ENCODE measurements at regions of chr1 and their contacts with region 1.

Region 1: DNA sequence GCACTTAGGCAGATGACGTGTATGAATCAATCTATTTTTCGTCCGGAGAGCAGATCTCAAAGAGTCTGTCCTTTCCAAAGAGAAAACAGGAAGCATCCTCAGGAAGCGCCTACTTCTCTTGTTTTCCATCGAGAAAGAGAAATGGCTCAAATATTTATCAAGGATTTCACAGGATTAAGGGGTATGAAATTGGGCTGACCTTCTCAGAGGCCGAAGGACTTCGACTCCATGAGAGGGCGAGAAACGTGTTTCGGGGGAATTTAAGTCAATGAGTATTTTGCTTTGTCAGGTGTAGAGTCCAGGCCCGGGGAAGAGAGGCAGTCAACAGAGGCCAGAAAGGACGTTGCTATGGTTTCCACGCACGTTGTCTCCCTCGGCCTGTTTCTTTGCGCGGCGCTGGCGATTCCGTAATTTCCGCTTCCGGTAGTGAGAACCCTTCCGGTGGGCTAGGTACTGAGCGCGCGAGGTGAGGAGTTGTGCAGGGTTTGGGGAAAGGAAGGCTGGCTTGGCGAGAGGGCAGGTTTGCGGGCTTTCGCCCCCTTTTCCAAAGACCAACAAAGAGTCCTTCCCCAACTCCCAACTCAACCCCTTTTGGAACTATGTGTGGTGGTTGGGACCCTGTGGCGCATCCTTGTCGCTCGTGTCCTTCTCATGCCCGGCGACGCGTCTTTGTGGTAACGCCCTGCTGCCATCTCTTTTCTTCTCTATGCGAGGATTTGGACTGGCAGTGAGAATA is at the start of gene MRPS21:
- DNase-seq: peak; percentile 77
- ATAC-seq: peak; percentile 97
- H3K4me3 Mint-ChIP-seq: peak within 1 kb of the TSS; percentile 94
- H3K27ac Mint-ChIP-seq: peak within 1 kb of the TSS; percentile 99
- H3K4me1 Mint-ChIP-seq: peaks cover 30% of the 10 kb centered on the region
- H3K27me3 Mint-ChIP-seq: no peaks in the 10 kb centered on the region
- CTCF ChIP-seq: no peak
- total RNA-seq, gene MRPS21: 66.8 and 69.2 TPM in 2 replicates

Region 2: DNA sequence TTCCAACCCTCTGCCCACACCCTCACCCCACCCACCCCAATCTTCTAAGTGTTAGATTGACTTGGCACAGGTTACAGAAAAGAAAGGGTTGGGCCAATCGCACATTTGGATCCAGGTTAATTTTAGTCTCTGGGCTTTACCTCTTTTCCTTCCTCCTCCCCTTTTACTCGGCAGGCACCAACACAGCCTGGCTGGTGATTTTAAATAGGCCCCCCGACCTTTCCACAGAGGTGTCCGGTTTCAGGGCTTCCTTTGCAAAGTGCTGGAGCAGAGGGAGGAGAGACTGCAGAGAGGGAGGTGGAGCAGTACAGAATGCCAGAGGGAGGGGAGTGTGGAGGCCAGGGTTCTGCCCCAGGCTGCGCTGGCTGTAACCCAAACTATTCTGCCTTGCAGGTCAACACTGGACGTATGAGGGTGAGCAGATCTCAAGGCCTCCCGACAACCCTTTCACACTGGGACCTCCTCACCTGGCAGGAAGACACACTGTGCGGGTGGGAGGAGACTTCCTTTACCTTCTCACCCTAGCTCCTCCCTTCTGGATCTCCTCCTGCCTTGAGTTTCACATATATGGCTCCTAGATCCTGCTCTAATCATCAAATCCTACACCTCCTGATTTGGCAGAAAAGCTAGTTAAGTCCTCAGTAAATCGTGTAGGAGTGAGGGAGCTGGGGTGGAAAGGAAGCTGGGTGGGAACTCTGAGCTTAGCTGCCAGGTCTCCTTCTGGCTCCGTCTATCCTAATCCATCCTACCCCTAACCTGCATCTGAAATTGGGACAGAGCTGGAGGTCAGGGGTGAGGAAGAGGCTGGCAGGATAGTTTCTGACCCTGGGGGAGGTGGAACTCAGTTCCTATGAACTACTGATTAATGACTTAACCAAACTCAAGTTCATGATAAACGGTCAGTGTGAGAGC is 33.6 kb before region 1 on chr1:
- CTCF ChIA-PET with region 1: no interaction called
- POLR2A ChIA-PET with region 1: no interaction called
- intact Hi-C with region 1: loop called (anchors 1 kb)
- DNase-seq: no peak
- ATAC-seq: no peak
- H3K4me3 Mint-ChIP-seq: no peak overlapping the region
- H3K27ac Mint-ChIP-seq: no peak overlapping the region
- H3K4me1 Mint-ChIP-seq: peaks cover 17% of the 10 kb centered on the region
- H3K27me3 Mint-ChIP-seq: peaks cover 33% of the 10 kb centered on the region
- CTCF ChIP-seq: no peak

Region 3: GRCh38 chr1:150268705-150269403 is 24.7 kb before region 1 on chr1 and contains the start of gene APH1A:
- CTCF ChIA-PET with region 1: no interaction called
- POLR2A ChIA-PET with region 1: no interaction called
- intact Hi-C with region 1: loop called (anchors 1 kb)
- DNase-seq: peak; percentile 86
- ATAC-seq: peak; percentile 97
- H3K4me3 Mint-ChIP-seq: peak within 1 kb of the TSS; percentile 100
- H3K27ac Mint-ChIP-seq: peak within 1 kb of the TSS; percentile 94
- H3K4me1 Mint-ChIP-seq: peaks cover 32% of the 10 kb centered on the region
- H3K27me3 Mint-ChIP-seq: peaks cover 4% of the 10 kb centered on the region
- CTCF ChIP-seq: no peak
- total RNA-seq, gene APH1A: 145 TPM in 2 replicates

Region 4: GRCh38 chr1:150321826-150322166 is 28.2 kb after region 1 on chr1:
- CTCF ChIA-PET with region 1: no interaction called
- POLR2A ChIA-PET with region 1: no interaction called
- intact Hi-C with region 1: loop called (anchors 2 kb)
- DNase-seq: no peak
- ATAC-seq: no peak
- H3K4me3 Mint-ChIP-seq: peak overlapping the region; percentile 100
- H3K27ac Mint-ChIP-seq: peak overlapping the region; percentile 99
- H3K4me1 Mint-ChIP-seq: peaks cover 22% of the 10 kb centered on the region
- H3K27me3 Mint-ChIP-seq: peaks cover 2% of the 10 kb centered on the region
- CTCF ChIP-seq: no peak

Region 5: DNA sequence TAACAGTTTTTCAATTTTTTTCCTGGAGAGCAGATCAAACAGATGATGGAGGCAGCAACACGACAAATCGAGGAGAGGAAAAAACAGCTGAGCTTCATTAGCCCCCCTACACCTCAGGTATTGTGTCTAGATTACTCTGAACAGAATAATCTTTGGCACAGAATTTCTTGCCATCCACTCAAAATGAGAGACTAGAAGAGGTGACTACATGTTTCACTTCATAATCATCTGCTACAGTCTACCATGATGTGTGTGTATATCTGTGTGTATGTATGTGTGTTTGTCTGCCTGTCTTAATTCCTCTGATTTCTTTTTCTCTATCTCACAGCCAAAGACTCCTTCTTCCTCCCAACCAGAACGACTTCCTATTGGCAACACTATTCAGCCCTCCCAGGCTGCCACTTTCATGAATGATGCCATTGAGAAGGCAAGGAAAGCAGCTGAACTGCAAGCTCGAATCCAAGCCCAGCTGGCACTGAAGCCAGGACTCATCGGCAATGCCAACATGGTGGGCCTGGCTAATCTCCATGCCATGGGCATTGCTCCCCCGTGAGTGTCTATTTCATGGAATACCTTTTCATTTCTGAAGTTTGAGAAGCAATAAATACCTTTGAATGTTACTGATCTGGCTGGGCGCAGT is 39.2 kb after region 1 on chr1:
- CTCF ChIA-PET with region 1: no interaction called
- POLR2A ChIA-PET with region 1: no interaction called
- intact Hi-C with region 1: no loop called
- DNase-seq: no peak
- ATAC-seq: no peak
- H3K4me3 Mint-ChIP-seq: no peak overlapping the region
- H3K27ac Mint-ChIP-seq: no peak overlapping the region
- H3K4me1 Mint-ChIP-seq: peaks cover 2% of the 10 kb centered on the region
- H3K27me3 Mint-ChIP-seq: no peaks in the 10 kb centered on the region
- CTCF ChIP-seq: no peak

Region 6: GRCh38 chr1:150486964-150487762 is 193.6 kb after region 1 on chr1 and contains the start of gene TARS2:
- CTCF ChIA-PET with region 1: interaction called, 4 read pairs
- POLR2A ChIA-PET with region 1: no interaction called
- intact Hi-C with region 1: loop called (anchors 1 kb)
- DNase-seq: peak; percentile 78
- ATAC-seq: peak; percentile 100
- H3K4me3 Mint-ChIP-seq: peak within 1 kb of the TSS; percentile 96
- H3K27ac Mint-ChIP-seq: peak within 1 kb of the TSS; percentile 98
- H3K4me1 Mint-ChIP-seq: peaks cover 18% of the 10 kb centered on the region
- H3K27me3 Mint-ChIP-seq: no peaks in the 10 kb centered on the region
- CTCF ChIP-seq: no peak
- total RNA-seq, gene TARS2: 42.6 and 50.7 TPM in 2 replicates